ENCODE measurements at regions of chr6 and their contacts with region 1.

Region 1: DNA sequence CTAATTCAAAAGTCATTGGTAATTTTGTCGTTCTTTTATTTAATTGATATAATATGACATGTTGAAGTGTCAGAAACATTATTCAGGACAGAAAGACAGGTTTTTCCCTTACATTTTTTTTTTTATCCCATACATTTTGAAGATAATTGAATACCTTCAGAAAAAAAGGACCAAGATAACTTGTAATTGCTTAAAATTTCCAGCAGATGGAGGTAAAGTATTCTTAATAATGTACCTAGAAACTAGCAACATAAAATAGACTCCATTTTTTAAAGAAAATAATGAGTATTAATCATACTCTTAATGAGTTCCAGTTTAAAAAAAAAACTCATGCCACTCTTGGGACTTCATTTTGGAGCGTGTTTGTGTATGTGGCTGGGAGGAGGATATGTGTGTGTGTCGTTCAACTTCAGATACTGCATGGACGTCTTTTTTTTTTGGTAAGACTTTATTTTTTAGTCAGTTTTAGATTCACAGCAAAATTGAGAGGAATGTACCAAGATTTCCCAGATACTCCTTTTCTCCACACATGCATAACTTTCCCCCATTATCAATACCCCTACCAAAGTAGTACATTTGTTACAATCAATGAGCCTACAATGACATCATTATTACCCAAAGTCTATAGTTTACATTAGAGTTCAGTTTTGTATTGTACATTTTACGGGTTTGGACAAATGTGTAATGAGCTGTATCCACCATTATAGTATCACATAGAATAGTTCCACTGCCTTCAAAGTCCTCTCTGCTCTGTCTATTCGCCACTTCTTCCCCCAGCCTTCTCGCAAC is 79.4 kb downstream of the ROS1 start:
- DNase-seq: peak in 1 of 2 donors; percentile 30
- ATAC-seq: peak in 2 of 3 donors; percentile 36 to 49
- H3K4me3 ChIP-seq: no peak overlapping the region
- H3K4me3 Mint-ChIP-seq: no peak overlapping the region
- H3K27ac ChIP-seq: no peak overlapping the region
- H3K27ac Mint-ChIP-seq: no peak overlapping the region
- H3K4me1 ChIP-seq: no peaks in the 10 kb centered on the region
- H3K4me1 Mint-ChIP-seq: no peaks in the 10 kb centered on the region
- H3K27me3 ChIP-seq: no peaks in the 10 kb centered on the region
- H3K27me3 Mint-ChIP-seq: peaks cover 19 to 34% of the 10 kb centered on the region in 2 donors
- CTCF ChIP-seq: peak; percentile 68

Region 2: GRCh38 chr6:117555882-117556498 is 209.7 kb after region 1 on chr6:
- intact Hi-C with region 1: loop called (anchors 5 kb)
- DNase-seq: peak; percentile 42 to 78
- ATAC-seq: peak in 2 of 3 donors; percentile 49 to 58
- H3K4me3 ChIP-seq: no peak overlapping the region
- H3K4me3 Mint-ChIP-seq: no peak overlapping the region
- H3K27ac ChIP-seq: no peak overlapping the region
- H3K27ac Mint-ChIP-seq: no peak overlapping the region
- H3K4me1 ChIP-seq: no peaks in the 10 kb centered on the region
- H3K4me1 Mint-ChIP-seq: peaks cover 2 to 6% of the 10 kb centered on the region in 2 donors
- H3K27me3 ChIP-seq: no peaks in the 10 kb centered on the region
- H3K27me3 Mint-ChIP-seq: no peaks in the 10 kb centered on the region
- CTCF ChIP-seq: peak; percentile 93

Measured in natural killer cell (primary cell).